Mammary epithelial cell (primary cell): ENCODE measurements at regions of chr3 and their contacts with region 1.

Region 1: DNA sequence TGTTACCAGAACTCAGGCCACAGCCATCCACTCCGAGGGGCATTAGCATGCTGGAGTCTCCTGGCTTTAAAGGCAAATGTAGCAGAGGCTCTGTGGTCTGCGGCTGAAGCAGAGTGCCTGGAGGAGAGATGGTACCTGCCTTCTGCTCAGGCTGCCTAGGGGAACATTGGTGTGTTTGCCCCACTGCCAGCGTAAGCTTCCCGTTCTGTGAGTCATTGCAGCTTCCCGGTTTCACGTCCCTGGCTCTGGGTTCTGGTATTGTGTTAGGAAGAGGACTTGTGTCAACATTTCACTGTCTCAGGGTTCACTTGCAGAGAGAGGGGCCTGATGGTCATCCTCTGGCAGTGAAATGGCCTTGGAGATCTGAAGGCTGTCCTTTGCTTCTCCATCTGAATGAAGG is 1.8 kb downstream of the GASK1A start:
- DNase-seq: peak; percentile 19
- H3K4me3 ChIP-seq: no peak overlapping the region
- H3K27ac ChIP-seq: no peak overlapping the region
- H3K4me1 ChIP-seq: peaks cover 5% of the 10 kb centered on the region
- H3K27me3 ChIP-seq: peaks cover 21% of the 10 kb centered on the region
- CTCF ChIP-seq: no peak

Region 2: DNA sequence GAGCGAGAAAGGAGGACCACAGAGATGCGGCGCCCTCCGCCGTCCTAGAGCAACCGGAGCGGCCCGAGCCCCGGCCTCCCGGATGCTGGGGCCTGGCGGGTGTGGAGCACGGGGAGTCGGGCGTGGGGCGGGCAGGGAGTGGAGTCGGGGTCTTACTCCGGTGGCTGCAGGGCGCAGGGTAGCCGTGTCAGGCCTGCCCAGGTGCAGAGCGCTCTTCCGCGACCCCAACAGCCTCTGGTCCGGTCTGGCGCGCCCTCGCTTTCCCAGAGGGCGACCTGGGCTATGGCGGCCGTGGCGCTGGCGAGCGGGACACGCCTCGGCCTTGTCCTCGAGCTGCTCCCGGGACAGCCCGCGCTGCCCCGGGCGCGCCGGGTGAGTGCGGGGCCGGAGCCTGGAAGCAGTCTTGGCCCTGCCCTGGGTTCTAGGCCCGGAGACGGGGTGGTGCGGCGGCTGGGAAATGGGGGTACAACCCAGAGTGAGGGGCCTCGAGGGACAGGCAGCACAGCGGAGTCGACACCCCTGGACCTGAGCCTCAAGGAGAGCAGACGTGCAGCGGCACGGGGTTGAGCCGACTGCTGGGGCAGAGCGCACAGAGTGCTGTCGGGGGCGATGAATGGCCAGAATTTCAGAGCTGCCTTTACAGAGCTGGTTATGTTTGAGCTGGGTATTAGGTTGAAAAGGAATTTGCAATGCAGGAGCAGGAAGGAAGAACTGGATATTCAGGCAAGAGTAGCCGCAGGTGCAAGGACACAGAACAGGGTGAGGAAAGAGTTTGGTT is 74.7 kb before region 1 on chr3 and contains the start of gene ZNF662:
- CTCF ChIA-PET with region 1: no interaction called
- dilution Hi-C with region 1: no loop called
- in situ Hi-C with region 1: no loop called
- intact Hi-C with region 1: no loop called
- DNase-seq: no peak
- H3K4me3 ChIP-seq: peak within 1 kb of the TSS in 2 of 3 experiments; percentile 33 to 41
- H3K27ac ChIP-seq: no peak within 1 kb of the TSS
- H3K4me1 ChIP-seq: peaks cover 5% of the 10 kb centered on the region
- H3K27me3 ChIP-seq: peaks cover 22% of the 10 kb centered on the region
- CTCF ChIP-seq: no peak
- total RNA-seq, gene ZNF662: 0.47 to 3.8 TPM

Region 3: GRCh38 chr3:42934116-42934515 is 46.8 kb before region 1 on chr3:
- CTCF ChIA-PET with region 1: no interaction called
- dilution Hi-C with region 1: loop called (anchors 5 kb)
- in situ Hi-C with region 1: no loop called
- intact Hi-C with region 1: no loop called
- DNase-seq: no peak
- H3K4me3 ChIP-seq: no peak overlapping the region
- H3K27ac ChIP-seq: no peak overlapping the region
- H3K4me1 ChIP-seq: no peaks in the 10 kb centered on the region
- H3K27me3 ChIP-seq: peaks cover 1% of the 10 kb centered on the region
- CTCF ChIP-seq: no peak

Region 4: DNA sequence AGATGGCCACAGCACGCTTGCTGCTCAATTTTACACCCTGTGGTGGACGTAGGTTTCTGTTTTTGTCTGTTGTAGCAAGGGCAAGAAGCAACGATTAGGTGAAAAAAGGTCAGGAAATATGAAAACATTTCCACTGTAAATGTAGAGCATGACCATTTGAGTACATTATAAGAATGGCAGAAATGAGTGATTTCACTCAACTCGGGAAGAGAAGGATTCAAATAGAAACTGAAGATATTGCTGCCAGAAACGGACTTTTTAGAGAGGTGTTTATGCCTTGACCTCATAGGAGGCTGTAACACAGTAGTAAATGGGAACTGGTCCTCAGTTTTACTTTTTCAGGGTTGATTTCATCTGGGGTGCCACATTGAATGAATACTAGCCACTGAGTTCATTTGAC is 34.9 kb before region 1 on chr3:
- CTCF ChIA-PET with region 1: no interaction called
- dilution Hi-C with region 1: no loop called
- in situ Hi-C with region 1: no loop called
- intact Hi-C with region 1: no loop called
- DNase-seq: no peak
- H3K4me3 ChIP-seq: no peak overlapping the region
- H3K27ac ChIP-seq: no peak overlapping the region
- H3K4me1 ChIP-seq: no peaks in the 10 kb centered on the region
- H3K27me3 ChIP-seq: no peaks in the 10 kb centered on the region
- CTCF ChIP-seq: no peak

Region 5: DNA sequence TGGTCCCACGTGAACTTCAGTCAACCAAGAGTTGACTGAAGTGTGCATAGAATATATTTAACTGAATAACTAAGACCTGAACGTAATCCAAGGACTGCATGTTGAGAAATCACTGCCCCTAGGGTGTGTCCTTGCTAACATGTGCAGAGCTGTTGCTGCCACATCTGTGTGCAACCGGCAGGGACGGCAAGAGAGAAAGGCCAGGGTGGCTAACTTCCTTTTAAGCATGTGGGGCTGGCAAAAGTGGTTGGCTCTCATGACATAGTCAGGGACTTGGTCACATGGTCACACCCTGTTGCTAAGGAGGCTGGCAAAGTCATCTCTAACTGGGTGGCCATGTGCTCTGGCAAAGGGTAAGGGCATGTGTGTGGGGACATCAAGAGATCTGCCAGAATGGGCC is 50.6 kb after region 1 on chr3:
- CTCF ChIA-PET with region 1: no interaction called
- dilution Hi-C with region 1: loop called (anchors 10 kb)
- in situ Hi-C with region 1: no loop called
- intact Hi-C with region 1: no loop called
- DNase-seq: no peak
- H3K4me3 ChIP-seq: no peak overlapping the region
- H3K27ac ChIP-seq: no peak overlapping the region
- H3K4me1 ChIP-seq: no peaks in the 10 kb centered on the region
- H3K27me3 ChIP-seq: peaks cover 2% of the 10 kb centered on the region
- CTCF ChIP-seq: no peak